Posterior cingulate gyrus (tissue), 11 donors: ENCODE measurements at regions of chr18 and their contacts with region 1.

Region 1: DNA sequence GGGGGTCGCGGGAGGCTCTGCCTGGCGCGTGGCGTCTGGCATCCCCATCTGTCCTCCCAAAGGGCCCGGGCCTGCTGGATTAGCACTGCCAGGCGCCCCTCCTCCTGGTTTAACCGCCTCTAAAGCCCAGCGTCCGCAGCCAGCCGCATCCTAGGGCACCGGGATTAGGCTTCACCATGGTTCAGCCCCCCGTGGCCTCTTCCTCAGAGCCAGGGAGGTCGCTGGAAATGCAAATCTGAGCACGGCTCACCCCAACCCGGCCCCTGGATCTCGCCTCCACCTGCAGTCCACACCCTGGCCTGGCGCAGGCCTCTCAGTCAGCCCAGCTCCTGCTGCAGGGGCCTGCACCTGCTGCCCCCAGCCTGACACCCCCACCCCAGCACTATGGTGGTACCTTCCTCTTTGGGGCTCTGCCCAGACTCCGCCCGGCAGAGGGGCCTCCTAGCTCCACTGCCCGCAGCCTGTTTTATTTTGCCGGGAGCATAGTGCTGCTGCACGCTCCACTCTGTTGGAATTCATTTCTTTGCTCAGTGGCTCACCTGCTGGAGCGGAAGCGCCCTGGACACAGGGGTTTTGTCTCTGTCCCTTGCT is 13.2 kb downstream of the PRELID3A start:
- DNase-seq: peak in 6 of 10 donors; percentile 39 to 91 (median 68)

Region 2: DNA sequence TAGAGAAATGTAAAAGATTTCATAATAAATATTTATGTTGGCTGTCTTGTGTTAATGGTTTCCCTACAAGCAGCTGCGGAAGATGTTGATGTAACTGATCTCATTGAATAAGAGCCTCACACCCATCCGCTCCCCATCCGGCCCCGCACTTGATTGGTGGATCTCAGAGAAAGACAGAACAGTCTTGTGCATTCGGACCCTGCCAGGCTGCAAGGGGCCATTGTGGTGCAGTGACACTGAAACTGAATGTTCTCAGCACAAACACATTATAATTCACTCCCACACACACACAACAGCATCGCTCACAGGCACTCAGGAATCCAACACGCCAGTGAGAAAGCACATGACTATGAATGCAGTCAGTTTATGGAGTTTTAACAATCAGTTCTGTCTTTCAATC is 34.6 kb after region 1 on chr18:
- intact Hi-C with region 1: loop called (anchors 2 kb)
- DNase-seq: peak; percentile 81 to 98 (median 91)

Region 3: GRCh38 chr18:12516049-12516630 is 95.2 kb after region 1 on chr18:
- intact Hi-C with region 1: loop called (anchors 10 kb)
- DNase-seq: no peak

Region 4: DNA sequence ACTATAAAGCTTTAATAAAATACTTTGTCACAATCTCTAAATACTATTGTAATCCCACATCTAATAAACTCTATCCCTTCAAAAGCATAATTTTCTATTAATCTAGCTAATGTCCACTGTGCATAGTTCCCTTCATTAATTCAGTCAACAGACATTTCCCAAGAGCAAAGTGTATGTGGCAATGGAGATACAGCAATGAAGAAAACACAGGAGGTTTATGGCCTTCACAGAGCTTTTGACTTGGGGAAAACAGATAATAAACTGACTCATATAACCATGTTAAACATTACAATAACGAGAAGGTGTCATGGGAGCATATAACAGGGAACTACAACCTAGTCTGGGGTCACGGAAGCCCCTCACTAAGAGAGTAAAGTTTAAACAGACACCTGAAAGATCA is 150.7 kb after region 1 on chr18:
- intact Hi-C with region 1: no loop called
- DNase-seq: no peak